Left cardiac atrium (tissue), 4 donors: ENCODE measurements at regions of chr19 and their contacts with region 1.

Region 1: GRCh38 chr19:20039203-20039723 is at the start of gene ZNF682:
- DNase-seq: peak; percentile 97
- ATAC-seq: peak; percentile 100
- total RNA-seq, gene ZNF682: 3.5 to 3.7 TPM

Region 2: GRCh38 chr19:20051841-20052768 is 12.8 kb after region 1 on chr19:
- intact Hi-C with region 1: loop called in 1 of 2 experiments (anchors 1 kb)
- DNase-seq: peak; percentile 97
- ATAC-seq: peak; percentile 99 to 100